Head of caudate nucleus (tissue), 42 donors: ENCODE measurements at regions of chr2 and their contacts with region 1.

Region 1: DNA sequence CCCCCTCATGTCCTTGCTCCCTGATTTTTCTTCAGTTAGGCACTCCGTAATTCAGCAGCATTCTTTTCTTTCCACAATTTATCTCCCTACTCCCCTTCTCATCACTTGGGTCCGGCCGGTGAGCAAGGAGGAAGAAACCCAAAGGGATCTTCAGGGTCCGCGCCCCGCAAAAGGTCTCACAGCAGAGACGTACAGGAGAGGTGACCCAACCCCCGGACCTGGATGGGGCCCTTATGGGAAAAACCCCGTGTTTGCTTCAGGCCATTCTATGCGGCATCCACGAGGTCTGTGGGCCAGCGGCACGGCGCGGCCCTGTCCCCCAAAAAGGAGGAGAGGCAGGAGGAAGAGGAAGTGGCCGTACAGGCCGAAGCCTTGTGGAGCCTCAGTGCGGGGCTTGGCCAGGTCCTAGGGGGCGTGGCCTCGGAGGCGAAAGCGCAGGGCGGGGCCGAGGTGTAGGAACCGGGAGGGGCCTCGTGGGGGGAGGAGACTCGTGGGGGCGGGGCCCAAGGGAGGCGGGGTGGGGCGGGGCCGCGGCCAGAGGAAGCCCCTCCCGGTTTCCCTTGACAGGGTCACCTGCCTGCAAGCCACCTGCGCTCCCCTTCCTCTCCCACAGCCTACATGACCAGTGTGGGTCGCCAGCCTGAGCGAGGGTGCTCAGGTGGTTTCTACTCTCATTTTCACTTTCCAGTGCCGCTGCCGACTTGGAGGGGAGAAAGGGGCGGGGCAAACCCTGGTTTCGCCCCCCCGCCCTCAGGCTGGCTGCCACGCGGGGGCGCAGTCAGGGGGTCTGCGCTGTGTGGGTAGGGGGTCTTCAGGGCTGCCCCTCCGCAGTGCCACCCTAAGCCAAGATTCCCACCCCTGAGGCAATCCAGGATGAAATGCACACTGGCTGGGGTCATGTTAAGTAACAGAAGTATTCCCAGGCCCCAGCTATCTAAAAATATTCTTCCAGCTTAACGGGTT is 156.4 kb upstream of the XPO1 start:
- DNase-seq: peak; percentile 85 to 98 (median 95)

Region 2: DNA sequence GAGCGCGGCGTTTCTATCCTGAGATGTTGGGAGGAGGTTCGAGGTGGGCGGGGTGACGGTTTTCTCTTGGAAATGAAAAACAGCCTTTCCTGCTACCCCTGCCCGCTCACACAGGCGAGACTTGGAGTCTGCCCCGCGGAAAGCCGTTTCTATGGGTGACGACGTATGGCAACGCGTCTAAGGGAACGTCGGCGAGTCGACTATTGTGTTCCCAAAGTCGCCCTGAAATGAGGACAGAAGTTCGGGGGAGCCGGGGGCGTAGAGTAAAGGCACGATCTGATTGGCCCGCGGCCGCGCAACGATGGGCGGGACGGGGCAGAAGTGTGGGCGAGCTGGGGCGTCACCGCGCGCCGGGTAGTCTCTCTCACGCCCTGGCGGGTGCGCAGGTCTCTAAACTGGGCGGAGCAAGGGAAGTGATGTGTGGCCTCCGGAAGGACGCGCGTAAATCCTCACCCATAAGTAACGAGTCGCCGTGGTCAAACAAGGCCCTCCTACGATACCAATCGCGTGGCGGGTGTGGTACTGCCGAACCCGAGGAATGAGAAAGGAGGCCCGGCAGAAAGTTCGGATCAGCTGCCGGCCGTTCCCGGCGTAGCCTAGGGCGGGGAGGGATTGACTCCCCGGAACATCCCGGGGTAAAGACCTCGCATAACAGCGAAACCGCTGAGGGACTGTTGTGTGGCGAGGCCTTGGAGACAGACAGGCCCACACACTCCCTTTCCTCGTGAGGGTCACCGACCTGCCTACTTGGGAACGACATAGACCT is 69.6 kb after region 1 on chr2:
- intact Hi-C with region 1: loop called (anchors 5 kb)
- DNase-seq: peak; percentile 94 to 99 (median 98)